ENCODE measurements at regions of chr20 and their contacts with region 1.

Region 1: DNA sequence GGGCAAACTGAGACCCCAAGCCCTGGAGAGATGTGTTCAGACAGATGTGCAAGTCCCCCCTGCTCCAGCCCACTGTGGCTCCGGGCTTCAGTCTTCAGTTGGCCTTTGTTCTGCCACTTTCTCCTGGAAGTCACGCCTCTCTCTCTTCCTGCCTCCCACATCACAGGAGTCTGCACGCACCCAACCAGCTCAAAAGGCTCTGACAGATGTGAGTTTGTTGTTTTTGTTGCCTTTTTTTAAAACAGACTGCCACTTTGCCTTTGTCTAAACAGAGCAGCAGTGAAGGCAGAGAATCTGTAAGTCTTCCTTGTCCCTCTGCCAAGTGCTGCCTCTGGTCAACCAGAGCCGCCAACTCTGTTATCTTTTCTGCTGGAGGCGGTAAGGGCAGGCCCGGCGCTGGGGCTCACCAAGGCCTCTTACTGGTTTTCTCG is 149.7 kb downstream of the TFAP2C start:
- DNase-seq: peak; percentile 29
- H3K4me3 Mint-ChIP-seq: no peak overlapping the region
- H3K27ac Mint-ChIP-seq: peak overlapping the region; percentile 4
- H3K4me1 Mint-ChIP-seq: peaks cover 24% of the 10 kb centered on the region
- H3K27me3 Mint-ChIP-seq: peaks cover 21% of the 10 kb centered on the region
- CTCF ChIP-seq: no peak

Region 2: GRCh38 chr20:56143759-56144158 is 635.0 kb before region 1 on chr20:
- CTCF ChIA-PET with region 1: no interaction called
- intact Hi-C with region 1: no loop called
- DNase-seq: no peak
- H3K4me3 Mint-ChIP-seq: no peak overlapping the region
- H3K27ac Mint-ChIP-seq: no peak overlapping the region
- H3K4me1 Mint-ChIP-seq: no peaks in the 10 kb centered on the region
- H3K27me3 Mint-ChIP-seq: no peaks in the 10 kb centered on the region
- CTCF ChIP-seq: no peak

Region 3: DNA sequence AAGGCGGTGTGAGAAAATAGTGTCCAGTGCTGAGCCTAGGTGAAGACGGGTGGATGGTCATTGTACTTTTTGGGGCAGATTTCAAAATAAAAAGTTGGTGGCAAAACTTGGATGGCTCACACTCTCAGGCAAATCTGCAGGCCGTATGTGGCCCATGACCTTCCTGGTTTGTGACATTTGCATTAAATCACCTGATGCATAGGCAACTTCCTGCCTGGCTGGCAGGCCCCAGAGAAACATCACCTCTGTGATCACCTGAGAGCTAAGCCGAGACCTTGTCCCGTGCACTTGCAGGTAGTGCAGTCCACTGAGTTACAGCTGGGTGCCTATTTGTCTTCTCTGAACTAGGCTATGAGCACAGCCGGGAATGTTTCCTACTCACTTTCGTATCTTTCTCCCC is 32.2 kb before region 1 on chr20:
- CTCF ChIA-PET with region 1: interaction called, 12 read pairs
- intact Hi-C with region 1: no loop called
- DNase-seq: no peak
- H3K4me3 Mint-ChIP-seq: no peak overlapping the region
- H3K27ac Mint-ChIP-seq: no peak overlapping the region
- H3K4me1 Mint-ChIP-seq: peaks cover 8% of the 10 kb centered on the region
- H3K27me3 Mint-ChIP-seq: peaks cover 84% of the 10 kb centered on the region
- CTCF ChIP-seq: no peak

Measured in Calu3 (cell line).